A549 (cell line): ENCODE measurements at regions of chr5 and their contacts with region 1.

Region 1: DNA sequence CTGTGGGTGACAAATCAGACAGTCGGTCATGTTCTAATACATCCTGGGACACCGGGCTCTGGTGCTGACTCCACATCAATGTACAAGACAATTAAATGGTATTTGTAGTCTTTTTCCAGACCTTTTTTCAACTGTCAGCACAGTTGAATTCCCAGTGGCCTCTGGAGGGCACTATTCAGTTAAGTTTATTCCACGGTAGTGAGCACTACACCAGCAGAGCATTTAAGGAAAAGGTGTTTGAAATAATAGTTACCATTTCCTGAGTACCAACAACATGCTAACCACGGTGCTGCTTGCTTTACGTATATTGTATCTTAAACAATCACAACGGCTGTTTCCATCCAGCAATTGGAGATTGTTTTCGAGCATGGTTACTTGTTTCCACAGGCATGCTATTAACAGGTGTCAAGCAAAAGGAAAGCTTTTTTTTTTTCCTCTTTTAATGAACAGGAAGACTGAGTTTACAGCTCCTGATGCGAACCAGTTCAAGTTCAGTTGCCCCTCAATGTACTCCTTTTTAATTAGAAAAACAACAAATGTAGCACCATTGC is 186.7 kb downstream of the PDZD2 start:
- DNase-seq: peak; percentile 36 to 63
- ATAC-seq: peak; percentile 94 to 97
- H3K4me3 ChIP-seq: no peak overlapping the region
- H3K27ac ChIP-seq: peak overlapping the region in 1 of 2 experiments; percentile 21; a peak in 1 of 6 replicates
- H3K4me1 ChIP-seq: peaks cover 5% of the 10 kb centered on the region; the same call in 1 of the 3 replicates
- CTCF ChIP-seq: peak; percentile 88
- EP300 ChIP-seq: no peak
- POLR2A ChIP-seq: no peak
- RAD21 ChIP-seq: peak; percentile 85 to 91

Region 2: GRCh38 chr5:31769530-31769929 is 56.1 kb before region 1 on chr5:
- CTCF ChIA-PET with region 1: no interaction called
- POLR2A ChIA-PET with region 1: no interaction called
- DNase-seq: no peak
- ATAC-seq: no peak
- H3K4me3 ChIP-seq: no peak overlapping the region
- H3K27ac ChIP-seq: no peak overlapping the region
- H3K4me1 ChIP-seq: no peaks in the 10 kb centered on the region
- CTCF ChIP-seq: no peak
- EP300 ChIP-seq: no peak
- POLR2A ChIP-seq: no peak
- RAD21 ChIP-seq: no peak

Region 3: GRCh38 chr5:31809050-31809870 is 16.3 kb before region 1 on chr5:
- CTCF ChIA-PET with region 1: interaction called, 41 read pairs
- POLR2A ChIA-PET with region 1: no interaction called
- DNase-seq: peak; percentile 81 to 83
- ATAC-seq: peak; percentile 92 to 97
- H3K4me3 ChIP-seq: no peak overlapping the region
- H3K27ac ChIP-seq: peak overlapping the region in 1 of 2 experiments; percentile 25; a peak in 3 of 6 replicates
- H3K4me1 ChIP-seq: peaks cover 16% of the 10 kb centered on the region
- CTCF ChIP-seq: peak; percentile 86
- EP300 ChIP-seq: no peak
- POLR2A ChIP-seq: no peak
- RAD21 ChIP-seq: peak; percentile 86 to 88

Region 4: DNA sequence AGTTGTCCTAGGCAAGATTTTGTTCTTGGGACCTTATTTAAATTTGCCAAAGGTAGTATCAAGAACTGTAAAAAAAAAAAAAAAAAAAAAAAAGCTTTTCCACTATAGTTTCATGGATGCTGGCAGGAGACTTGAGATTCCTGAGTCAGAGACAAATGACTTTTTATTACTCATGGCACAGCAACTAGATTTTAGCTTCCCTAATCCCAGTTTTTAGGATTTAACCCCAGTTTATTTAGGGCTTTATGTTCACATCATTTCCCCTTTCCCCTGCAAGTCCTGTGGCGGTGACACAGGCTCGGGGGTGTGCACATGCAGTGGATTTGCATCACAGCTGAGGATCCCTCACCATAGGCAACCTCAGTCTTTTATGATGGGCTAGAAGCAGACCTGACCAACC is 203.7 kb after region 1 on chr5:
- CTCF ChIA-PET with region 1: no interaction called
- POLR2A ChIA-PET with region 1: no interaction called
- DNase-seq: no peak
- ATAC-seq: no peak
- H3K4me3 ChIP-seq: no peak overlapping the region
- H3K27ac ChIP-seq: peak overlapping the region; percentile 75; a peak in 5 of 6 replicates
- H3K4me1 ChIP-seq: peaks cover 34% of the 10 kb centered on the region
- CTCF ChIP-seq: no peak
- EP300 ChIP-seq: no peak
- POLR2A ChIP-seq: no peak
- RAD21 ChIP-seq: no peak

Region 5: DNA sequence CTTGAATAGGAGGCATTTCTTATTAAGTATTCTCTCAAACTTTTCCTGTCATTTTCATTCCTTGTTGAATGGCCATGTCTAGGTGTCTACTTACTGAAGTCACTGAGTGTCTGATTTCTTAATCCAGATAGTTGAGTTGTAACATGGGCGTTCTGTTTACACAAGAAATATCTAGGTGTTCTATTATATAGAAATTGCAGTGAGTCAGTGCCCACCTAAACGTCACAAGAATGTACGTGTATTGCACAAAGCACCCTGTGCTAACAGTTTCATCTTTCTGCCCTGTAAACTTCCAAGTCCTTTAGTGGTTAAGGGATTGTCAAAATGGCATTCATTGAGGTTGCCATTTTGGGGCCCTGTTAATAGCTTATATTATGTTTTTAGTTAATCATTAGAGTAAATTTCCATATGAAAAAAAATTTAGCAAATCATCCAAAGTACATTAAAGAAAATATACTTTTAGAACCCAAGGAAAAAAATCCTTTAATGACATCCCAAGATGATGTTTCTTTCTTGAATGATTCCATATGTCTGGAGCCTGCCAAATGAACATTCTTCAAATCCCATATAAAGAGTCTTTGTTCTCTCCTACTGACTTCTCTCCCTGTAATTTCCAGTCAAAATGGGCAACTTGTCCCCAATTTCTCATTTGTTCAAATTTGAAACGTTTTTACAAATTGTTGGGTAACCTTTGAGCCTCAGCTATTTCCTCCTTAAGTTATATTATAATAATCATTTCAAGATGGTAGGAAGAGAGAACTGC is 234.4 kb after region 1 on chr5:
- CTCF ChIA-PET with region 1: interaction called, 14 read pairs
- POLR2A ChIA-PET with region 1: no interaction called
- DNase-seq: peak; percentile 64 to 84
- ATAC-seq: peak; percentile 85 to 92
- H3K4me3 ChIP-seq: no peak overlapping the region
- H3K27ac ChIP-seq: peak overlapping the region; percentile 71 to 74; a peak in 5 of 6 replicates
- H3K4me1 ChIP-seq: peaks cover 38% of the 10 kb centered on the region
- CTCF ChIP-seq: no peak
- EP300 ChIP-seq: peak; percentile 35 to 52; a peak in 3 of 5 replicates
- POLR2A ChIP-seq: no peak
- RAD21 ChIP-seq: no peak; a peak in 1 of 5 replicates

Region 6: DNA sequence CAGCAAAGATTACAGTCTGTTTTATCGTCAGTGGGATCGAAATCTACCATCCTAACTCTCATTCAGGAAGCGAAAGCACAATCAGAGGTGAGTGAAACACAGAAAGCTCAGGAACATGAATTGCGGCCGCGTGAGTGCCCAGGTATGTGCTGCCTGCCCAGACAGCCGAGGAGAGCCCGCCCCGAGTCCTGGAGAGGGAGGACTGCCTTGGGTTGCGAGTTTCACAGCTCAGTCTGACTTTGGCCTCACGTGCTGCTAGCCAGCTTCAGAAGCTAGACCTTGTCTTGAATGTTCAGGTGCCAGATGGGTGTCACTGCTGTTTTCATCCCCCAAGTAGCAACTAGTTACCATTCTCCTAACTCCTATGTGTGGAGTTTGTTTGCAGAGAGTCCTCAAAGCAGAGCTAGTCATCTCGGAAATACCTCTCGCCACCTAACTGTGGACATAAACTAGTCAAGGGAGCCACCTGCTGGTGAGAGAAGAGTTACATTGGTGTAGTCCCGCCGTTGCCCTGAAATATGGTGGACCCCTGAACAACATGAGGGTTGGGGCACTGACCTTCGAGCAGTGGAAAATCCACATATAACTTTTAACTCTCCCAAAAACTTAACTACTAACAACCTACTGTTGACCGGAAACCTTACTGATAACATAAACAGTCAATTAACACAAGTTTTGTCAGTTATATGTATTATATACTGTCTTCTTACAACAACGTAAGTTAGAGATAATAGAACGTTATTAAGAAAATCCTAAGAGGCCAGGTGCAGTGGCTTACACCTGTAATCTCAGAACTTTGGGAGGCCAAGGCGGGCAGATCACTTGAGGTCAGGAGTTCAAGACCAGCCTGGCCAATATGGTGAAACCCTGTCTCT is 267.6 kb after region 1 on chr5:
- CTCF ChIA-PET with region 1: interaction called, 53 read pairs
- POLR2A ChIA-PET with region 1: no interaction called
- DNase-seq: peak; percentile 77 to 78
- ATAC-seq: peak; percentile 96
- H3K4me3 ChIP-seq: no peak overlapping the region
- H3K27ac ChIP-seq: no peak overlapping the region
- H3K4me1 ChIP-seq: 0 out of 3 replicates have a peak, but pooled peaks cover 3% of the 10 kb centered on the region
- CTCF ChIP-seq: peak; percentile 88
- EP300 ChIP-seq: no peak
- POLR2A ChIP-seq: no peak
- RAD21 ChIP-seq: peak; percentile 90 to 94

Region 7: DNA sequence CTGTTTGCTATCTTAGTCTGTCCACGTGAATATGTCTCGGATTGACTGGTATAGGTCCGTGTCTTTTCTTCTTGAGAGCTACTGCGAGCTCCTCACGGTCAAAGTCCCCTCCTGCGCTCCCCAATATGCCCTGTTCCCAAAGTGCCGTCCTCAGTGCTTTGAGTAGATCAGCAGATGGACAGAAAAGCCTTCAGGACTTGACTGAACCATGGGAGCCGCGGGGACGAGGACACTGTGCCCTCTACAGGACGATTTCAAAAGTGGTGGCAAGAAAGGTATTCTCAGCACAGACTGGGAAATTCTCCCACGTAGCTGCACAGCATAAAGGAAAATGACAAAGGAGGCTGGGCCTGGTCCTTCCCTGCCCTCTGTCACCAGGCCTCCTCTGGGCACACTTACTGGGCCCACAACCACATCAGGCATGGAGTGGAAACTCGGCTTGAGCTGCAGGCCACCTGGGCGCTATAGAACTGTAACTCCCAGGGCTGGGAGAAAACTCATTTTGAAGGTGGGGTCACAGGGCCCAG is 503.8 kb after region 1 on chr5:
- CTCF ChIA-PET with region 1: interaction called, 11 read pairs
- POLR2A ChIA-PET with region 1: no interaction called
- DNase-seq: peak; percentile 80
- ATAC-seq: peak; percentile 96 to 98
- H3K4me3 ChIP-seq: no peak overlapping the region
- H3K27ac ChIP-seq: 0 out of 6 replicates have a peak overlapping the region, but pooled peaks of 1 of the 2 experiments have one; percentile 34
- H3K4me1 ChIP-seq: peaks cover 3% of the 10 kb centered on the region; the same call in 1 of the 3 replicates
- CTCF ChIP-seq: peak; percentile 79
- EP300 ChIP-seq: no peak
- POLR2A ChIP-seq: no peak
- RAD21 ChIP-seq: peak; percentile 86 to 93